Tibial artery (tissue), 4 donors: ENCODE measurements at regions of chr1 and their contacts with region 1.

Region 1: DNA sequence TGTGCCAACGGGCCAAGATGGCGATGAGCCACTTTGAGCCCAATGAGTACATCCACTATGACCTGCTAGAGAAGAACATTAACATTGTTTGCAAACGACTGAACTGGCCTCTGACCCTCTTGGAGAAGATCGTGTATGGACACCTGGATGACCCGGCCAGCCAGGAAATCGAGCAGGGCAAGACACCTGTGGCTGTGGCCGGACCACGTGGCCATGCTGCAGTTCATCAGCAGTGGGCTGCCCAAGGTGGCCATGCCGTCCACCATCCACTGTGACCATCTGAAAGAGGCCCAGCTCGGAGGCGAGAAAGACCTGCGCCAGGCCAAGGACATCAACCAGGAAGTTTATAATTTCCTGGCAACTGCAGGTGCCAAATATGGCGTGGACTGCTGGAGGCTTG is 32.2 kb upstream of the GPR137B start:
- DNase-seq: no peak
- H3K4me3 ChIP-seq: no peak overlapping the region
- H3K27ac ChIP-seq: no peak overlapping the region
- H3K4me1 ChIP-seq: no peaks in the 10 kb centered on the region
- H3K27me3 ChIP-seq: peaks cover 0 to 6% of the 10 kb centered on the region in 2 donors
- CTCF ChIP-seq: no peak

Region 2: GRCh38 chr1:236489710-236490377 is 379.7 kb after region 1 on chr1:
- intact Hi-C with region 1: loop called (anchors 2 kb)
- DNase-seq: no peak
- H3K4me3 ChIP-seq: no peak overlapping the region
- H3K27ac ChIP-seq: no peak overlapping the region
- H3K4me1 ChIP-seq: peaks cover 0 to 3% (median 0%) of the 10 kb centered on the region in 4 donors
- H3K27me3 ChIP-seq: peaks cover 0 to 2% of the 10 kb centered on the region in 2 donors
- CTCF ChIP-seq: peak; percentile 50 to 57